ENCODE measurements at regions of chr3 and their contacts with region 1.

Region 1: DNA sequence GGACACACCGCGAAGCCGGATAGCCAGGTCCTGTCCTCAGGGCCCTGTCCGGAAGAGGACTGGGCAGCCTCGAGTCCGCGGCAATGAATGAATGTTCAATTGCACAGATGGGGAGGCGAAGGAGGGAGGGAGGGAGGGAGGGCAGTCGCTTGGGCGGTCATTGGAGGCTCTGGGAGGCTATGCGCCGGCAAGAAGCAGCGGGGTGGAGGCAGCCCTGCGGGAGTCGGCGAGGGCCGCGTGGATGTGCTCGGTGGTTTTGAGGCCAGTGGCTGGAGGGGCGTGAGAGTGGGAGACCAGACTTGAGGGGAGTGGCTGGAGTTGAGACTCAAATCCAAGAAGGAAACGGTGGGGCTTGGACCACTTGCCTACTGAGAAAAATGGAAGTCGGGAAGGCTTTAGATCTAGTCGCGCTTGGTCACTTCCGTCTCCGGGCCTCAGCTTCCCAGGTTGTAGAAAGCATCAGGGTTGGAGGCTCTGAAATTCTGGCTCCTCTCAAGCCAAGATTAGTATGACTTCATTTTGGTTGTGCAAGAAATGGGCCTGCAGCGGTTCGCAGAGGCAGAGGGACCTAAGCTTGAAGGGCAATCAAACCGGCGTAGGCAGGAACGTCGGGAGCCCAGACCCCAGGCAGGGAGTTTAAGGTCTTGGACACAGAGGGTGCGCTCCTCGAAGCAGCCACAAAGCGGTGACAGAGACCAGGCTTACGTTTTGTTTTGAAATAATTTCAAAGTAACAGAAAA is 21.1 kb upstream of the PLXND1 start:
- DNase-seq: peak; percentile 42 to 79 (median 61)
- ATAC-seq: peak; percentile 62 to 84 (median 76)
- H3K4me3 ChIP-seq: peak overlapping the region; percentile 53 to 65
- H3K4me3 Mint-ChIP-seq: peak overlapping the region; percentile 82 to 86 (median 85)
- H3K27ac ChIP-seq: peak overlapping the region; percentile 49
- H3K27ac Mint-ChIP-seq: peak overlapping the region; percentile 78 to 87
- H3K4me1 ChIP-seq: peaks cover 4 to 24% of the 10 kb centered on the region in 2 experiments
- H3K4me1 Mint-ChIP-seq: peaks cover 13 to 22% (median 16%) of the 10 kb centered on the region in 3 donors
- H3K27me3 ChIP-seq: peaks cover 0 to 13% of the 10 kb centered on the region in 2 experiments
- H3K27me3 Mint-ChIP-seq: no peaks in the 10 kb centered on the region

Region 2: DNA sequence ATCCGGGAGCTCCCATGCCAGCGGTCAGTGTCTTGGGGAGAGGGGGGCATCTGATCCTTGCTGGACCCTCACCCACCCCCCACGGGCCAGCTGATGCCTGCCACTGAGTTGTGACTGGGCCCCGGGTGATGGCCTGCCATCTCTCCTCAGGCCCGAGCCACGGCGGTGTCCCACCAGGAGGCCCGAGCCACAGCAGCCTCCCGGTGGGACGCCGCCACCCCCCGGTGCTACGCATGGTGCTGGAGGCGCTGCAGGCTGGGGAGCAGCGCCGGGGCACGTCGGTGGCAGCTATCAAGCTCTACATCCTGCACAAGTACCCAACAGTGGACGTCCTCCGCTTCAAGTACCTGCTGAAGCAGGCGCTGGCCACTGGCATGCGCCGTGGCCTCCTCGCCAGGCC is 80.4 kb before region 1 on chr3:
- CTCF ChIA-PET with region 1: no interaction called
- POLR2A ChIA-PET with region 1: interaction called in 1 of 2 experiments, 10 read pairs
- DNase-seq: no peak
- ATAC-seq: no peak
- H3K4me3 ChIP-seq: no peak overlapping the region
- H3K4me3 Mint-ChIP-seq: no peak overlapping the region
- H3K27ac ChIP-seq: no peak overlapping the region
- H3K27ac Mint-ChIP-seq: no peak overlapping the region
- H3K4me1 ChIP-seq: no peaks in the 10 kb centered on the region
- H3K4me1 Mint-ChIP-seq: no peaks in the 10 kb centered on the region
- H3K27me3 ChIP-seq: peaks cover 0 to 13% of the 10 kb centered on the region in 2 experiments
- H3K27me3 Mint-ChIP-seq: no peaks in the 10 kb centered on the region

Region 3: DNA sequence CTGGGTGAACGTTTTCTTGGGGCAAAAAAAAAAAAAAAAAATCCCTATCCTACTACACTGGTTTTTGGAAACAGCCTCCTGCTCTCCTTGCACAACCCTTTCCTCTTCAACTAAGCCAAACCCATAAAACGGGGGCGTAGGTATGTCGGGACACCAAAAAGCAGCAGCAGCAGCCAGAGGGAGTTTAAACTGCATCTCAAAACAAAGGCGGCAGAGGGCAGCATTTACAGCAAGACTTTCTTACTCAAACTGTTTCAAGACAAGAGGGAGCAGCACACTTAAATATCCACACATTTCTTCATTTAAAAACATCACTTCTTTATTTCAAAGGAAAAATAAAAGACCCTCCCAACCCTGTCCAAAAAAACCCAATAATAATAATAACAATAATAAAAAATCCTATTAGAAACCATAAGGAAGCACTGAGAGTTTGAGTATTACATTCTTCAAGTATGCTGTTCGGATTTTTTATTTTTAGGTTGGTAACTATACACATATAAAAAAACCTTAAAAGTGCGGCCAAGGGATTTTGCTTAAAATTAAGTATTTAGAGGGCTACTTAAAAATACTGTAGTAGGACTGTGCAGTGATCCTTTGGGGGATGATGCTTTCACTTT is 22.8 kb after region 1 on chr3:
- CTCF ChIA-PET with region 1: no interaction called
- POLR2A ChIA-PET with region 1: no interaction called
- DNase-seq: peak in 32 of 35 experiments; percentile 14 to 68 (median 40)
- ATAC-seq: peak in 2 of 4 experiments; percentile 40 to 45
- H3K4me3 ChIP-seq: no peak overlapping the region
- H3K4me3 Mint-ChIP-seq: no peak overlapping the region
- H3K27ac ChIP-seq: no peak overlapping the region
- H3K27ac Mint-ChIP-seq: no peak overlapping the region
- H3K4me1 ChIP-seq: no peaks in the 10 kb centered on the region
- H3K4me1 Mint-ChIP-seq: peaks cover 0 to 6% (median 2%) of the 10 kb centered on the region in 3 donors
- H3K27me3 ChIP-seq: no peaks in the 10 kb centered on the region
- H3K27me3 Mint-ChIP-seq: no peaks in the 10 kb centered on the region

Measured in T-cell (primary cell).